CD4-positive, alpha-beta T cell (primary cell): ENCODE measurements at regions of chr9 and their contacts with region 1.

Region 1: GRCh38 chr9:93566408-93567270 is 9.7 kb upstream of the PHF2 start:
- DNase-seq: peak; percentile 95 to 99 (median 99)
- ATAC-seq: peak; percentile 97
- H3K4me3 ChIP-seq: peak overlapping the region; percentile 70
- H3K4me3 Mint-ChIP-seq: peak overlapping the region; percentile 88
- H3K27ac ChIP-seq: peak overlapping the region; percentile 89 to 92
- H3K27ac Mint-ChIP-seq: peak overlapping the region; percentile 90
- H3K4me1 ChIP-seq: peaks cover 19% of the 10 kb centered on the region
- H3K4me1 Mint-ChIP-seq: peaks cover 10% of the 10 kb centered on the region
- H3K27me3 ChIP-seq: no peaks in the 10 kb centered on the region
- H3K27me3 Mint-ChIP-seq: no peaks in the 10 kb centered on the region
- CTCF ChIP-seq: peak; percentile 91

Region 2: GRCh38 chr9:92293452-92294296 is 1273.0 kb before region 1 on chr9 and contains the start of gene IARS1:
- CTCF ChIA-PET with region 1: no interaction called
- POLR2A ChIA-PET with region 1: no interaction called
- intact Hi-C with region 1: loop called in 1 of 2 experiments (anchors 10 kb)
- DNase-seq: peak; percentile 97 to 100 (median 99)
- ATAC-seq: peak; percentile 93
- H3K4me3 ChIP-seq: peak within 1 kb of the TSS; percentile 70
- H3K4me3 Mint-ChIP-seq: peak within 1 kb of the TSS; percentile 98
- H3K27ac ChIP-seq: peak within 1 kb of the TSS; percentile 73 to 74
- H3K27ac Mint-ChIP-seq: peak within 1 kb of the TSS; percentile 97
- H3K4me1 ChIP-seq: peaks cover 25% of the 10 kb centered on the region
- H3K4me1 Mint-ChIP-seq: peaks cover 69% of the 10 kb centered on the region
- H3K27me3 ChIP-seq: no peaks in the 10 kb centered on the region
- H3K27me3 Mint-ChIP-seq: no peaks in the 10 kb centered on the region
- CTCF ChIP-seq: no peak
- total RNA-seq, gene IARS1: 49.8 to 56.8 TPM

Region 3: GRCh38 chr9:92877531-92878430 is 688.9 kb before region 1 on chr9 and contains the start of gene ZNF484:
- CTCF ChIA-PET with region 1: no interaction called
- POLR2A ChIA-PET with region 1: no interaction called
- intact Hi-C with region 1: loop called in 1 of 2 experiments (anchors 10 kb)
- DNase-seq: peak; percentile 94 to 100 (median 98)
- ATAC-seq: peak; percentile 96
- H3K4me3 ChIP-seq: peak within 1 kb of the TSS; percentile 72
- H3K4me3 Mint-ChIP-seq: peak within 1 kb of the TSS; percentile 98
- H3K27ac ChIP-seq: peak within 1 kb of the TSS; percentile 61 to 78
- H3K27ac Mint-ChIP-seq: peak within 1 kb of the TSS; percentile 96
- H3K4me1 ChIP-seq: peaks cover 8% of the 10 kb centered on the region
- H3K4me1 Mint-ChIP-seq: peaks cover 61% of the 10 kb centered on the region
- H3K27me3 ChIP-seq: no peaks in the 10 kb centered on the region
- H3K27me3 Mint-ChIP-seq: no peaks in the 10 kb centered on the region
- CTCF ChIP-seq: no peak
- total RNA-seq, gene ZNF484: 13.3 to 13.6 TPM

Region 4: GRCh38 chr9:93154315-93154903 is 412.2 kb before region 1 on chr9:
- CTCF ChIA-PET with region 1: no interaction called
- POLR2A ChIA-PET with region 1: no interaction called
- intact Hi-C with region 1: loop called in 1 of 2 experiments (anchors 5 kb)
- DNase-seq: peak in 8 of 14 experiments; percentile 26 to 67 (median 37)
- ATAC-seq: peak; percentile 79
- H3K4me3 ChIP-seq: no peak overlapping the region
- H3K4me3 Mint-ChIP-seq: no peak overlapping the region
- H3K27ac ChIP-seq: no peak overlapping the region
- H3K27ac Mint-ChIP-seq: no peak overlapping the region
- H3K4me1 ChIP-seq: peaks cover 7% of the 10 kb centered on the region
- H3K4me1 Mint-ChIP-seq: peaks cover 14% of the 10 kb centered on the region
- H3K27me3 ChIP-seq: no peaks in the 10 kb centered on the region
- H3K27me3 Mint-ChIP-seq: no peaks in the 10 kb centered on the region
- CTCF ChIP-seq: peak; percentile 36